Cardiac septum (tissue), 1 donor: ENCODE measurements at regions of chr10 and their contacts with region 1.

Region 1: DNA sequence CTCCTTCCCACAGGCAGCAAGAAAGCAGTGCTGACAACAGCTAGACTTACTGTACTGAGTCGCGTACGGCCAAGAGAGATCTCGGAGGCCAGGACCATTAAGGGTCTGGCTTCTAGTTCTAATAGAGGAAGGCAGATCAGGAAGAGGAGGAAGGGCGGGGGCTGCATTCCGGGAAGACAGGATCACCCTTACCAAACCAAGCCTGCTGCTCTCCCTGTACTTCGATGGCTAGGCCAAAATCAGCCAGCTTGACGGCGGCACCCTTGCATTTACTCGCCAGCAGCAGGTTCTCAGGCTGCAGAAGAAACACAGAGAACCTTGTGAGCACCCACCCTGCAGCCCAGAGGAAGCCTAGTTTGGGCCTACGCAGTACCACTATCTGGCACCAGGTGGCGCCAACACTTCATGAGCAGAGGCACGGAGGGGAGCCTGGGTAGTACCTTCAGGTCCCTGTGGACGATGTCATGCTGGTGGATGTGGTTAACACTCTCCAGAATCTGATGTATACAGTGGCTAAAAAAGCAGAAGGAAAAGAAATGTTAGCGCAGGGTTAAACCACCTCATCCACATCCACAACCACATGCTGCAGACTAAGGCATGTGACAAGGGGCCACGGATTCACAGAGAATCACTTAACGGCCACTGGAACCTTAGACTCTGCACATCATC is 25.4 kb downstream of the CAMK2G start:
- DNase-seq: peak; percentile 91

Region 2: DNA sequence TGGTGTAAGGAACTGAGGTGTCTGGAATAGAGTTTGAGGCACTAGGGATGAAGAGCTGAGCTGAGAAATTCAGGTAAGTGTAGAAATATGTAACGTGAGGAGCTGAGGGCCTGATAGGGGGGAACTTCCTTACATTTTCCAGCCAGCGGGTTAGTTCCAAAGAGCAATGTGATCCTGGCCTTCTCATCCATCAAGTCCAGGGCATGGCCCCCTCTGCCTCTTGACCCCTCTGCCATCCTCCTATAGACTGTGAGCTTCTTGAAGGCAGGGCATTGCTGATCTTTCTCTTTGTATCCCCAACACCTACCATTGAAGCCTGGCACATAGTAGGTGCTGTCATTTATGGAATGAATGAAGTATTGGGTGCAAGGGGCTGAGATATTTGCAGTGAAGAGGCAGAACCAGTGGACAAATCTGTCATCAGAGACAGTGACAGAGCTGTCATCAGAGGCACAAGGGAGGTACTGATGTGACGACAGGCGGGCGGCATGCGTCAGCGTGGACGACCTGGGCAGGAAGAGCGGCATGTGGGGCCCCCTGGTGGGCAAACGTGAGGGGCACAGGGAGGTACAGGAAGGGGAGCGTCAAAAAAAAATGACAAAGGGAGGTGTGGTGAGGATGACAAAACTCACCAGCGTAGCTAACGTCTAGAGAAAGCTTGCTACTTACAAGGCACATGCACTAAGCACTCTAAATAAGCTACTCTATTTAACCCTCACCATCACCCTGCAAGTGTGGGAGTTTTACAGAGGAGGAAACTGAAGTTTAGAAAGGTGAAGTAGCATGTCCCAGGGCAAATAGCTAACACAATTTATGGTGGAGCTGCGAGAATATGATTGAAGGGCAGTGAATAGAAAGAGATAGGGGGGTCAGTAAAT is 30.6 kb after region 1 on chr10:
- intact Hi-C with region 1: loop called (anchors 1 kb)
- DNase-seq: peak; percentile 95

Region 3: DNA sequence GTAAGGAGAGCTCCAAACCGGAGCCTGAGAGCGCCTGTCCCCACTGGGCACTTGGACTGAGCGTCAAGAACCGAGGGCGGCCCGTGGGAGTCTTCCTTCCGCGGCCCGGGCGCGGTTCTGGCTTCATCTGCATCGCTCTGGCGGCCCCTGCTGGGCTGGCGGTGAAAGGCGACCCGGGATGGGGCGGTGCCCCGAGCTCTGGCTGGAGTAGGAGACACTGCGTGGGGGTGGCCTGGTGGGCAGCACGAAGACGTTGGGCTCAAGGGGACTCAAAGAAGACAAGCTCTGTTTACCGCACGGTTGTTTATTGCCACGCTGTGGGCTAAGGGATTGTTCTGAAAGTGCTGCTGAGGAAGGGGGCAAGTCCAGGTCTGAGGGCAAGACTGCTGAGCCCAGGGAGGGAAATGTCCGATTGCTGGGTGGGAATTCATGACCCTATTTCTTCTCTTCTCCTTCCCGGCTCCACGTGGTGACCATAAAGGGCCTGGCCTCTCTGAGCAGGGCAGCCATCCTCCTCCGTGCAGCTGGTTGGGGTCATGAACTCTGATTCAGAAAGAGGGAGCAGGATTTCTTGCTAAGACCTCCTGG is 91.8 kb after region 1 on chr10:
- intact Hi-C with region 1: loop called (anchors 2 kb)
- DNase-seq: peak; percentile 95